ENCODE measurements at regions of chr1 and their contacts with region 1.

Region 1: GRCh38 chr1:168603501-168604110 is 27.2 kb downstream of the XCL1 start:
- DNase-seq: peak; percentile 84
- ATAC-seq: peak; percentile 91
- H3K4me3 Mint-ChIP-seq: no peak overlapping the region
- H3K27ac Mint-ChIP-seq: no peak overlapping the region
- H3K4me1 Mint-ChIP-seq: no peaks in the 10 kb centered on the region
- H3K27me3 Mint-ChIP-seq: no peaks in the 10 kb centered on the region
- CTCF ChIP-seq: peak; percentile 55

Region 2: GRCh38 chr1:168591066-168591465 is 12.5 kb before region 1 on chr1:
- CTCF ChIA-PET with region 1: interaction called, 28 read pairs
- POLR2A ChIA-PET with region 1: interaction called, 3 read pairs
- intact Hi-C with region 1: no loop called
- DNase-seq: no peak
- ATAC-seq: no peak
- H3K4me3 Mint-ChIP-seq: no peak overlapping the region
- H3K27ac Mint-ChIP-seq: no peak overlapping the region
- H3K4me1 Mint-ChIP-seq: no peaks in the 10 kb centered on the region
- H3K27me3 Mint-ChIP-seq: no peaks in the 10 kb centered on the region
- CTCF ChIP-seq: no peak

Region 3: DNA sequence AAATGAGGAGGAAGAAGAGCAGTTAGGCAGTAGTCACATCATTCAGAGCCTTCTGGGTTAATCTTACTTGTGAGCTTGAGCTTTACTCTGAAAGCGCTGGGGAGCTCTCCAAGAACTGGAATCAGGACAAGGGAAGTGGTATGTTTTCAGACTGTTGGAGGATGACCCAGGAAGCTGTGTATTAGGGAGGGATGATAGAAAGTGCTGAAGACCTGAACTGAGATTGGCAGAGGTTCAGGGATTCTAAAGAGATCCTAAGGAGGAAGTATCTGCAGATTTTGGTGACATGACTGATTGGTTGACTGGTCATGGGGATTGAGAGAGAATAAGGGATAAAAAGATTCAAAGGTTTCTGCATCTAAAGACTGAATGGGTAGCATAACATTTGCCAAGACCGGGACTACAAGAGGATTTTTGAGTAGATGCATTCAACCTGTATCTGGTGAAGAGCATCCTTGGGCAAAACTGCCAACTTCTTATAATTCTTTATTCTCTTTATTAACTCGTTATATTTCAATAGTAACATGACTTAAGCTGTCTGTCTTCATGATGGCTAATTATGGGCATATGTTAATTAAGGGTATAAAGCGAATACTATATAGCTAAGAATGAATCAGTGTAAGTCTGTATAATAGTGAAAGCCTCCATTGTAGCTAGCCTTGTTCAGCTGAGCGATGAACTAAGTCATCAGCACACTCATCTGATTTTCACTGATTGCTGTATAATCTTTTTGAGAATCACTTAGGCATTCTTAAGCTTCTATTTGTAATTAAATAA is 14.6 kb after region 1 on chr1:
- CTCF ChIA-PET with region 1: interaction called, 14 read pairs
- POLR2A ChIA-PET with region 1: interaction called, 3 read pairs
- intact Hi-C with region 1: no loop called
- DNase-seq: no peak
- ATAC-seq: no peak
- H3K4me3 Mint-ChIP-seq: no peak overlapping the region
- H3K27ac Mint-ChIP-seq: no peak overlapping the region
- H3K4me1 Mint-ChIP-seq: no peaks in the 10 kb centered on the region
- H3K27me3 Mint-ChIP-seq: no peaks in the 10 kb centered on the region
- CTCF ChIP-seq: no peak

Region 4: GRCh38 chr1:168637350-168637991 is 33.9 kb after region 1 on chr1:
- CTCF ChIA-PET with region 1: interaction called, 10 read pairs
- POLR2A ChIA-PET with region 1: no interaction called
- intact Hi-C with region 1: no loop called
- DNase-seq: no peak
- ATAC-seq: peak; percentile 47
- H3K4me3 Mint-ChIP-seq: no peak overlapping the region
- H3K27ac Mint-ChIP-seq: no peak overlapping the region
- H3K4me1 Mint-ChIP-seq: no peaks in the 10 kb centered on the region
- H3K27me3 Mint-ChIP-seq: no peaks in the 10 kb centered on the region
- CTCF ChIP-seq: peak; percentile 48

Region 5: DNA sequence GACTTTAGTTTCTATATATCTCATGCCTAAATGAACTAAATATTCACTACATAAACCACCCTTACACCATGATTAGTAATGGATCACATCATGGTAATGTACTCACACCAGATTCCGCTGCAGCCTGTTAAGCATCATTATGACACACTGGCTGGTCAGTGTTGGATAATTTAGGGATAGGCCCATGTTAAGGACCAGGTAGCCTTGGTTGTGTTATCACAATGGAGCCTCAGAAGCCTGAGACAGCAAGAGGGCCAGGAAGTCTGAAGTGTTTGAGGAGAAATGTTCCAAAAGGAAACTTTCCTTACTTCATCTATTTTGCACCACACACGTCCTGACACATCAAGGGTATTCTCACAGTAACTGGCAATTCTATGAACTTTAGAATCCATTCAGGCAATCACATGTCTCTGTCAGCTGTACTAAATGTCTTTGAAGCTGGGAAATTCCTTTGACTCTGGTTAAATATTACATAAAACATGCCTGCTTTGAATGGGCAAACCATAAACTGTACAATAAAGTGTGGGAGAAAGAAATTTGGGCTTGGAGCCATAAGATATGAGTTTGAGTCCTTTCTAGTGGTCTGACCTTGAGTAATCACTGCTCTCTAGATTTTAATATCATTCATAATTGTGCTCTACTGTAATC is 230.7 kb after region 1 on chr1:
- CTCF ChIA-PET with region 1: no interaction called
- POLR2A ChIA-PET with region 1: no interaction called
- intact Hi-C with region 1: no loop called
- DNase-seq: no peak
- ATAC-seq: no peak
- H3K4me3 Mint-ChIP-seq: no peak overlapping the region
- H3K27ac Mint-ChIP-seq: peak overlapping the region; percentile 80
- H3K4me1 Mint-ChIP-seq: peaks cover 13% of the 10 kb centered on the region
- H3K27me3 Mint-ChIP-seq: no peaks in the 10 kb centered on the region
- CTCF ChIP-seq: no peak

Region 6: GRCh38 chr1:169348383-169349036 is 744.9 kb after region 1 on chr1:
- CTCF ChIA-PET with region 1: interaction called, 53 read pairs
- POLR2A ChIA-PET with region 1: no interaction called
- intact Hi-C with region 1: loop called (anchors 10 kb)
- DNase-seq: no peak
- ATAC-seq: no peak
- H3K4me3 Mint-ChIP-seq: no peak overlapping the region
- H3K27ac Mint-ChIP-seq: no peak overlapping the region
- H3K4me1 Mint-ChIP-seq: peaks cover 20% of the 10 kb centered on the region
- H3K27me3 Mint-ChIP-seq: no peaks in the 10 kb centered on the region
- CTCF ChIP-seq: peak; percentile 96

Region 7: DNA sequence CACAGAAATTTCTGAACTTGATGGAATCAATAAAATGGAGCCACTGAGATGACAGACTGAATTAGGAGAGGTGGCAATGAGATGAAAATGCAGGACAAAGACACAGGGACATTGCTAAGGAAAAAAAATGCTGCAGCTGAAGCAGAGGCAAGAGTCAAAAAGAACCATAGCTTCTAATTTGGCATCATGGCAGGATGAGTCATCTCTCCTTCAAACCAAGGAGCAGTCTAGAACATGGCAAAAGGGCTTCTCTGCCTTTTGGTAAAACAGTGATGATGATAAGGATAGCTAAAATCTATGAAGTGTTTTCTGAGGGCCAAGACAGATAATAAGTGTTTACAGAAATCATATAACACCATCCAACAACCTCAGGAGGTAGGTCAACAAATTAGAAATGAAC is 865.4 kb after region 1 on chr1:
- CTCF ChIA-PET with region 1: no interaction called
- POLR2A ChIA-PET with region 1: no interaction called
- intact Hi-C with region 1: no loop called
- DNase-seq: no peak
- ATAC-seq: no peak
- H3K4me3 Mint-ChIP-seq: no peak overlapping the region
- H3K27ac Mint-ChIP-seq: no peak overlapping the region
- H3K4me1 Mint-ChIP-seq: peaks cover 2% of the 10 kb centered on the region
- H3K27me3 Mint-ChIP-seq: no peaks in the 10 kb centered on the region
- CTCF ChIP-seq: no peak

Measured in activated CD8-positive, alpha-beta T cell treated with anti-CD3 and anti-CD28 coated beads for 36 hours (primary cell).